ENCODE measurements at regions of chr1 and their contacts with region 1.

Region 1: GRCh38 chr1:53172426-53173128 is 24.0 kb upstream of the CPT2 start:
- DNase-seq: peak; percentile 52
- ATAC-seq: peak; percentile 35
- H3K4me3 ChIP-seq: no peak overlapping the region
- H3K27ac ChIP-seq: no peak overlapping the region
- H3K4me1 ChIP-seq: peaks cover 31% of the 10 kb centered on the region
- H3K27me3 ChIP-seq: no peaks in the 10 kb centered on the region
- CTCF ChIP-seq: peak; percentile 51; the same call in 1 of the 2 replicates

Region 2: DNA sequence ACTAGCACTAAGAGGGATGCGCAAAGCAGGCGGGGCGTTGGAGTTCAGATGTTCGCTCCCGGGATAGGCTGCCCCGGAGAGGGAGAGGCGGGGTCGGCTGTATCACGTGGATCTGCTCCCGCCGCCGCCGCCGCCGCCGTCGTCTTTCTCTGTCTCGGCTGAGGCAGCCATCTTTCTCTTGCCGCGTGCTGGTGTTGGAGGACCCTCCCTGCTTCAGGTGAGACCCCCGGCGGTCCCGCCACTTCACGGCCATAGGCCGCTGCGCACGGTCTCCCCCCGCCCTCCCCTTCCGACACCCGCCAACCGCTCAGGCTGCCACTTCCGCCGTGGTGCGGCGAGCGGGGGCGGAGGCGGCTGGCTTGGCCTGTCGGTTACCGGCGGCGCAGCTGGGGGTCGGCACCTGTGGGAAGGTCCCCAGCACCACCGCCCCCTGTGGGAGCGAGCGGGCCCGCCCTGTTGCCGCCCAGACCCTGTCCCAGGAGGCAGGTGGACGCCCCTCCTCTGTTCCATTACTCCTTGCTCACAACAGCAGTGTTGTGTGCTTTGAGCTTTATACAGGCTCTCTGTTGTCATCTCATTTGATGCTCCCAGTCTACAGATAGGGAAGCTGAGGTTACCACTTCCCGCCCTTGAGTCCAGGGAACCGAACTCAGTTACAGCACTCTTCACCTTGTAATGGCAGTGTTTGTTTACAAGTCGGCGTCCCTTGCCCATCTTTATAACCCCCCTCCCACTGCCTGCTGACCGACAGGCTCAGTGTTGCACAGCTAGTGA is 1116.2 kb before region 1 on chr1 and contains the start of gene BTF3L4:
- CTCF ChIA-PET with region 1: no interaction called
- POLR2A ChIA-PET with region 1: no interaction called
- intact Hi-C with region 1: loop called (anchors 10 kb)
- DNase-seq: peak; percentile 93
- ATAC-seq: peak; percentile 91
- H3K4me3 ChIP-seq: peak within 1 kb of the TSS; percentile 93
- H3K27ac ChIP-seq: peak within 1 kb of the TSS; percentile 60
- H3K4me1 ChIP-seq: peaks cover 33% of the 10 kb centered on the region
- H3K27me3 ChIP-seq: no peaks in the 10 kb centered on the region
- CTCF ChIP-seq: no peak
- total RNA-seq, gene BTF3L4: 33.8 and 50.4 TPM in 2 replicates

Region 3: GRCh38 chr1:52613636-52614373 is 558.8 kb before region 1 on chr1:
- CTCF ChIA-PET with region 1: no interaction called
- POLR2A ChIA-PET with region 1: no interaction called
- intact Hi-C with region 1: no loop called
- DNase-seq: no peak
- ATAC-seq: no peak
- H3K4me3 ChIP-seq: no peak overlapping the region
- H3K27ac ChIP-seq: no peak overlapping the region
- H3K4me1 ChIP-seq: no peaks in the 10 kb centered on the region
- H3K27me3 ChIP-seq: no peaks in the 10 kb centered on the region
- CTCF ChIP-seq: no peak

Region 4: GRCh38 chr1:52904927-52905698 is 267.5 kb before region 1 on chr1:
- CTCF ChIA-PET with region 1: no interaction called
- POLR2A ChIA-PET with region 1: no interaction called
- intact Hi-C with region 1: loop called (anchors 2 kb)
- DNase-seq: peak; percentile 37
- ATAC-seq: peak; percentile 72
- H3K4me3 ChIP-seq: no peak overlapping the region
- H3K27ac ChIP-seq: no peak overlapping the region
- H3K4me1 ChIP-seq: peaks cover 4% of the 10 kb centered on the region
- H3K27me3 ChIP-seq: no peaks in the 10 kb centered on the region
- CTCF ChIP-seq: peak; percentile 67

Region 5: DNA sequence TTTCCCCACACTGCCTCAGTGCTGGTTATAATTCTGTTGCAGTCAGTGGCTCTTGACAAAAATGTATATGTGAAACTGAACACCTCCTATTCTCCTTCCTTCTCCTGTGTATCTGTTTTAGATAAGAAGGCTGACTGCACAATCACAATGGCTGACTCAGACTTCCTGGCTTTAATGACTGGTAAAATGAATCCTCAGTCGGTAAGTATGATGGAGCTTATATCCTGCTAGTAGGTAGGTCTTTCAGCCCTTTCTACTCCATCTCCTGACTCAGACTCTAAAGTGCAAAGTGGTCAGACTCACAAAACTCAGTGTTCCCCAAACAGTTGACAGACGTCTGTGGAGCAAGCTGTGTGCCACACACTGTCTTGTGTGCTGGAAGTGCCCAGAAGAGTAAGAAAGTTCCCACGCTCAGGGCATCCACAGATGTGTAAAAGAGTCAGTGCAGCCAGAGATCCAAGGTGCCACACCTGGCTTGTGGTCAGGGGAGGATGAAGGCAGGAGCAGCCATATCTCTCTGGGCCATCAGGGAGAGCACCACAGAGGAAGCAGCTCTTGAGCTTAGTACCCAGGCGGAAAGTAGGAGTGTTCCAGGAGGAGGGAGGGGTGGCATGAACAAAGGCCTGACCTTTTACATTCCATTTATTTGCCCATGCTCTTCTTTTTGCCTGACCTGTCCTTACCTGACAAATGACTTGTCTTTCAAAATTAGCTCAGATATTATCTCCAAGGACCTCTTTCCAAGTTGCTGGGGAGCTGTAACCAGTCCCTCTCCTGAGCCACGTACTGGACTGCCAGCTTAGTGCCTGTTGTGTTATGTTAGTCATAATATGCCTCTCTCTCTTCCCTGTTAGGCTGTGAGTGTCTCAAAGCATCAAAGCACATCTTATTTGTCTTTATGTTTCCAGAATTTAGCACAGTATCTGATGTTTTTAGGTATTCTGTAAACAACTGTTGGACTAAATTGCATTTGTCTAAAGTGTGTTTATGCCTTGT is 124.5 kb before region 1 on chr1:
- CTCF ChIA-PET with region 1: no interaction called
- POLR2A ChIA-PET with region 1: no interaction called
- intact Hi-C with region 1: loop called (anchors 5 kb)
- DNase-seq: peak; percentile 91
- ATAC-seq: peak; percentile 83
- H3K4me3 ChIP-seq: no peak overlapping the region
- H3K27ac ChIP-seq: peak overlapping the region; percentile 89
- H3K4me1 ChIP-seq: peaks cover 40% of the 10 kb centered on the region
- H3K27me3 ChIP-seq: no peaks in the 10 kb centered on the region
- CTCF ChIP-seq: no peak

Region 6: GRCh38 chr1:53091841-53092645 is 80.5 kb before region 1 on chr1:
- CTCF ChIA-PET with region 1: no interaction called
- POLR2A ChIA-PET with region 1: no interaction called
- intact Hi-C with region 1: no loop called
- DNase-seq: peak; percentile 33
- ATAC-seq: no peak
- H3K4me3 ChIP-seq: no peak overlapping the region
- H3K27ac ChIP-seq: no peak overlapping the region
- H3K4me1 ChIP-seq: peaks cover 5% of the 10 kb centered on the region; the same call in 1 of the 2 replicates
- H3K27me3 ChIP-seq: no peaks in the 10 kb centered on the region
- CTCF ChIP-seq: no peak

Region 7: DNA sequence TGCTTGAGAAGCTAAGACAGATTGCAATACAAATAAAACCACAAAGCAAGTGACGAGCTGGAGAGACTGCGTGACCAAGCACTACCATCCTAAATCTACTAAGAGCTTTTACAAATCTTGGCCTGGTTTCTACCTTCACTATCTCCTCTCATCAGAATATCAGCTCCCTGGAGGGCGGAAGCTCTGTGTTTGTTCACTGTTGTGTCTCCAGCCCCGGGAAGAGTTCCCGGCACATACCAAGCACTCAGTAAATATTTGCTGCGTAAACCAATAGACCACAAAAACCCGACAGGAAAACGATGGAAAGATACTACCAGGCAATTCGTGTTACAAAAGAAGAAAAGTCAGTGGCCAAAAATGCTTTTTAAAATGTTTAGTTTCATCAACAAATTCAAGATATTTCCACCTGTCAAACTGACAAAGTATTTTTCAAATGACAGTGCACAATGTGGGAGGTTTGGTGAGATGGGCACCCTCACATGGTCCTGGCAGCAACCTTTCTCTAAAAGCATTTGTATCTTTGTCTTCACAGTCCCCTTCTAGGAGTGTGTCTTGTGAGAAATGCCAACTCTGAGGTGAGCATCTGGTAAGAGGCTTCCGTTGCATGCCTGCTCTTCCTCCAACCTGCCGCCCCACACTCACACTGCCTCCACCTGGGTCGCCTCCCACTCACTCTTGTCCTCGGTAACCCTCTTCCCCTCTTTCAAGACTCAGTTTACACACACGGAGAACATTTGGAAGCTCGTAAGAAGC is 64.8 kb before region 1 on chr1:
- CTCF ChIA-PET with region 1: no interaction called
- POLR2A ChIA-PET with region 1: no interaction called
- intact Hi-C with region 1: loop called (anchors 1 kb)
- DNase-seq: peak; percentile 97
- ATAC-seq: peak; percentile 89
- H3K4me3 ChIP-seq: peak overlapping the region; percentile 41; the same call in 1 of the 2 replicates
- H3K27ac ChIP-seq: peak overlapping the region; percentile 96
- H3K4me1 ChIP-seq: peaks cover 59% of the 10 kb centered on the region
- H3K27me3 ChIP-seq: no peaks in the 10 kb centered on the region
- CTCF ChIP-seq: no peak

Region 8: DNA sequence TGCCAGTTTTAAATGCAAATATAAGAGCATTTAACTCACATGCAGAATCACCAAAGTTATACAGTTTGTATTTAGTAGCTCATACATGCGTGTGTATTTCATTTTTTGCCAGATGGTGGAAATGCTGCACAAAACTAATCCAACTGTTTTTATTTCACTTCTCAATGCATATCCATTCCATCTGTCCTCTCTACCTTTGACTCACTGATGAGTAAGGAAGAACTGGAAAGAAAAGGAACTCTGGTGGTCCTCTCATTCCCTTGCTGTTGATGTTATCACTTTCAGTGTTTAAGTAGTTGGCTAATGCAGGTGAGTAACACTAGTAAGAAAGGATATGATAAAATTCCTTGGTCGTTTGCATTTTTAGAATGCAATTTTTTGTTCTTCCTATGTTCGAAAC is 24.5 kb before region 1 on chr1:
- CTCF ChIA-PET with region 1: no interaction called
- POLR2A ChIA-PET with region 1: no interaction called
- intact Hi-C with region 1: loop called (anchors 2 kb)
- DNase-seq: peak; percentile 86
- ATAC-seq: peak; percentile 37; the same call in 1 of the 2 replicates
- H3K4me3 ChIP-seq: no peak overlapping the region
- H3K27ac ChIP-seq: peak overlapping the region; percentile 98
- H3K4me1 ChIP-seq: peaks cover 41% of the 10 kb centered on the region
- H3K27me3 ChIP-seq: no peaks in the 10 kb centered on the region
- CTCF ChIP-seq: no peak

Measured in PC-3 (cell line).